PC-3 (cell line): ENCODE measurements at regions of chr2 and their contacts with region 1.

Region 1: DNA sequence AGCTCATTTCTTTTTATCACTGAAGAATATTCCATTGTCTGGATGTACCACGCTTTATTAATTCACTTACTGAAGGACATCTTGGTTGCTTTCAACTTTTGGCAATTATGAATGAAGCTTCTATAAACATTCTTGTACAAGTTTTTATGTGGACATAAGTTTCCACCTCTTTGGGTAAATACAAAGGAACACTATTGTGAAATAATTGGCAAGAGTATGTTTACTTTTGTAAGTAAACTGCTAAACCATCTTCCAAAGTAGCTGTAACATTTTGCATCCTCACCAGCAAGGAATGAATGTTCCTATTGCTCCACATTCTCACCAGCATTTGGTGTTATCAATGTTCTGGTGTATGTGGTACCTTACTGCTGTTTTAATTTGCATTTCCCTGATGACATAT is 15.8 kb upstream of the VWC2L start:
- DNase-seq: peak; percentile 61
- ATAC-seq: peak; percentile 82
- H3K4me3 ChIP-seq: no peak overlapping the region
- H3K27ac ChIP-seq: no peak overlapping the region
- H3K4me1 ChIP-seq: peaks cover 6% of the 10 kb centered on the region; the same call in 1 of the 2 replicates
- H3K27me3 ChIP-seq: no peaks in the 10 kb centered on the region
- CTCF ChIP-seq: no peak

Region 2: DNA sequence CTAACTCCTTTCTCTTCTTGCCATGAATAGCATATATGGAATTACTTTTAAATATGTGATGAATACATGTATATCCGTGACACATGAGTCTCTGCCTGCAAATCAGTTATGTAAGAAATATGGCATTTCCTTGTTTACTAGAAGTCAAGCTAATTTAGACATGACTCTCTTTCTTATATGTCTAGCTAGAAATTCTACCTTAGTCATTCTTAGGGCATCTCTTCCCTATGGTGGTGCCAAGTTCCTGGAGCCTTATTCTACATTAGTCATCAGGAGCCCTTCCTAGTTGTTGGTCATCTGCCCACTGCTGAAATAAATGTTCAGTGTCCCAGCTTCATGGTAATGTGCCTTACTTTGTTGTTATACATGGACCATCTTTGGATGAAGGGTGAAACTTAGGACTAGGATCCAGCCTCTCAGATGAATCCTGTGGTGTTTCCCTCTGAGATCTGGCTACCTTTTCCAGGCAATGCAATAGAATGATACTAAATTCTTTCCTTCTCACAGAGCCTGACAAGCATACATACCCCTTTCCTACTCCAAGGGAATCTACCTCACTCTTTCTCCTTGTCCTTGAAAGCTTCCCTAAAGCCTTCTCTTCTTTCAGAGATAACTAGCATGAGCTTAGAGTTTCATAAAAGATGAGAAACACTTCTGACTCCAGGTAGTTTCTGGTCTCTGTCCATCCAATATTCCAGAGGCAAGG is 399.5 kb before region 1 on chr2:
- CTCF ChIA-PET with region 1: no interaction called
- POLR2A ChIA-PET with region 1: no interaction called
- intact Hi-C with region 1: loop called (anchors 5 kb)
- DNase-seq: peak; percentile 95
- ATAC-seq: peak; percentile 98
- H3K4me3 ChIP-seq: no peak overlapping the region
- H3K27ac ChIP-seq: peak overlapping the region; percentile 61
- H3K4me1 ChIP-seq: peaks cover 17% of the 10 kb centered on the region
- H3K27me3 ChIP-seq: no peaks in the 10 kb centered on the region
- CTCF ChIP-seq: no peak

Region 3: GRCh38 chr2:214127571-214127970 is 267.5 kb before region 1 on chr2:
- CTCF ChIA-PET with region 1: no interaction called
- POLR2A ChIA-PET with region 1: no interaction called
- intact Hi-C with region 1: loop called (anchors 5 kb)
- DNase-seq: peak; percentile 55
- ATAC-seq: peak; percentile 41
- H3K4me3 ChIP-seq: no peak overlapping the region
- H3K27ac ChIP-seq: no peak overlapping the region
- H3K4me1 ChIP-seq: peaks cover 36% of the 10 kb centered on the region
- H3K27me3 ChIP-seq: no peaks in the 10 kb centered on the region
- CTCF ChIP-seq: no peak

Region 4: GRCh38 chr2:214310319-214310718 is 84.7 kb before region 1 on chr2:
- CTCF ChIA-PET with region 1: no interaction called
- POLR2A ChIA-PET with region 1: no interaction called
- intact Hi-C with region 1: loop called (anchors 5 kb)
- DNase-seq: peak; percentile 33
- ATAC-seq: peak; percentile 10; the same call in 1 of the 2 replicates
- H3K4me3 ChIP-seq: no peak overlapping the region
- H3K27ac ChIP-seq: no peak overlapping the region
- H3K4me1 ChIP-seq: peaks cover 24% of the 10 kb centered on the region
- H3K27me3 ChIP-seq: no peaks in the 10 kb centered on the region
- CTCF ChIP-seq: peak; percentile 54

Region 5: GRCh38 chr2:214367171-214367570 is 27.9 kb before region 1 on chr2:
- CTCF ChIA-PET with region 1: no interaction called
- POLR2A ChIA-PET with region 1: no interaction called
- intact Hi-C with region 1: no loop called
- DNase-seq: no peak
- ATAC-seq: no peak
- H3K4me3 ChIP-seq: no peak overlapping the region
- H3K27ac ChIP-seq: no peak overlapping the region
- H3K4me1 ChIP-seq: no peaks in the 10 kb centered on the region
- H3K27me3 ChIP-seq: no peaks in the 10 kb centered on the region
- CTCF ChIP-seq: no peak

Region 6: DNA sequence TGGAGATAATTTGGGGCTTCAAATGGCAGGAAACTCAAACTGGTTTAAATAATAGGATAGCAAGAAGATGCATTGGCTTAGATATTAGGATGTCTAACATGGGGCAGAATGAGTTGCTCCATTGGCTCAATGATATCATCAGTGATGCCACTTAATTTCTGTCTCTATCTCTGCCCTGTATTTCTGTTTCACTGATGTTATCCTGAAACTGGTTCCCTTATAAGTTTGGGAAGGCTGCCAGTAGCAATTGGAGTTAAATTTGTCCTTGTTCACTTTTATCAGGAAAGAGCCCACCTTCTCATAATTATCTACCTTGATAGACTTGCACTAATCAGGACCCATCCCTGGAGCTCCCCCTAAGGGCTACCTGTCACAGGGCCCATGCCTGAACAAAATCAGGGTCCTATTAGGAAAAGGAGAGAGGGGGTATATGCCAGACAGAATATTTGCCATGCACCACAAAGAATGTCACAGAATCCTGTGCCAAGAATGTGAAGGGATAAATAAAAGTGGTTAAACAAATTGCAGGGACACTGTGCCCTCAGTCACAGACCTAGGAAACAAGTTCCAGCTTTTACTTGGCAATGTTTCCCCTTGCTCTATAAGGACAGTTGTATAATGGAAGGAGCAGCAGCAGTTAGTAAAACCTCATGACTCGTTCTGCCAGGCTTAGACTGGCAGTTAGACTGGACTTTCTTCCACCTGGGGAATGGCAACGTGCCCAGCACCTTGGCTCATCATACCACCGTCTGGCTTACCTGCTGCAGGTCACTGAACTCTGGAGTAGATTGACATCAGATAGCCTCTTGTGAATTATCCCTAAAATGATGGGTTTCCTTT is 16.5 kb before region 1 on chr2:
- CTCF ChIA-PET with region 1: no interaction called
- POLR2A ChIA-PET with region 1: no interaction called
- intact Hi-C with region 1: loop called (anchors 1 kb)
- DNase-seq: peak; percentile 91
- ATAC-seq: peak; percentile 68
- H3K4me3 ChIP-seq: peak overlapping the region; percentile 8; the same call in 1 of the 2 replicates
- H3K27ac ChIP-seq: peak overlapping the region; percentile 80
- H3K4me1 ChIP-seq: peaks cover 46% of the 10 kb centered on the region
- H3K27me3 ChIP-seq: no peaks in the 10 kb centered on the region
- CTCF ChIP-seq: peak; percentile 58